ENCODE measurements at regions of chr10 and their contacts with region 1.

Region 1: DNA sequence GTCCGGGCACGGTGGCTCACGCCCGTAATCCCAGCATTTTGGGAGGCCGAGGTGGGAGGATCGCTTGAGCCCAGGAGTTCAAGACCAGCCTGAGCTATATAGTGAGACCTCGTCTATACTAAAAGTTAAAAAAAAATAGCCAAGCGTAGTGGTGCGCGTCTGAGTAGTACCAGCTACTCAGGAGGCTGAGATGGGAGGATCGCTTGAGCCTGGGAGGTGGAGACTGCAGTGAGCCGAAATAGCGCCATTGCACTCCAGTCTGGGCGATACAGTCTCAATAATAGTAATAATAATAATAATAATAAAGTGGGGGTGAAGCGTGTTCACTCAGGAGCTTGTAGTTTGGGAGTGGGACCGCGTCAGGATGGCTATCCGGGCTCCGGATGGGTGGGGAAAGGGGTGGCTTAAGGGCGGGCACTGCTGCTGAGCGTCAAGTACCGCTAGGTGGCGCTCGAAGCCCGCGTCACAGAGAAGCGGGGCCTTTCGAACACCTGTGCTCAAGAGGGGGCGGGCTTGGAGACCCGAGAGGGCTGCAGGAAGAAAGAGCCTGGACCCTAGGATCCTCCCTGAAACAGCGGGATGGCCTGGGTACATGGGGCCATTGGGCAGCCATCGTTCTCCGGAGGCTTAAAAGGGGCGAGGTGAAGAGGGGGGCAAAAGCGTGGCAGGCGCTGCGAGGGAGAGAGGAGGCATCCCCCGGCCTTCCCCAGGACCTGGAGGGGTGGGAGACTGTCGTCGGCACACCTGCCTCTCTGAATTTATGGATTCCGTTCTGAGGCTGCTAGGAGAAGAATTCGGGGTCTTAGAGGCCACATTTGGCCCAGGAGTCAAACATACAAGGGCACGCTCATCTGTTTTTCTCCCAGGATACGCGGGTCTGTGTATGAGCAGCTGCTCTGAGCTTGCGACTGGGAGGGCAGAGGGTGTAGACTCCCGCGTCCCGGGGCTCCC is 14.5 kb downstream of the LBX1 start:
- DNase-seq: no peak
- H3K4me3 ChIP-seq: no peak overlapping the region
- CTCF ChIP-seq: peak; percentile 82

Region 2: GRCh38 chr10:101141616-101142532 is 72.8 kb before region 1 on chr10:
- CTCF ChIA-PET with region 1: no interaction called
- POLR2A ChIA-PET with region 1: no interaction called
- DNase-seq: peak; percentile 16
- H3K4me3 ChIP-seq: no peak overlapping the region; the same call in 1 of the 2 replicates
- CTCF ChIP-seq: peak; percentile 95

Region 3: GRCh38 chr10:101155896-101156295 is 58.8 kb before region 1 on chr10:
- CTCF ChIA-PET with region 1: interaction called, 12 read pairs
- POLR2A ChIA-PET with region 1: no interaction called
- DNase-seq: no peak
- H3K4me3 ChIP-seq: no peak overlapping the region
- CTCF ChIP-seq: no peak

Region 4: GRCh38 chr10:101238732-101239105 is 24.0 kb after region 1 on chr10:
- CTCF ChIA-PET with region 1: interaction called, 27 read pairs
- POLR2A ChIA-PET with region 1: no interaction called
- DNase-seq: no peak
- H3K4me3 ChIP-seq: no peak overlapping the region
- CTCF ChIP-seq: peak; percentile 25

Region 5: GRCh38 chr10:101467286-101467770 is 252.6 kb after region 1 on chr10:
- CTCF ChIA-PET with region 1: interaction called, 118 read pairs
- POLR2A ChIA-PET with region 1: no interaction called
- DNase-seq: peak; percentile 33
- H3K4me3 ChIP-seq: no peak overlapping the region
- CTCF ChIP-seq: peak; percentile 85

Region 6: GRCh38 chr10:101558202-101558601 is 343.5 kb after region 1 on chr10:
- CTCF ChIA-PET with region 1: interaction called, 15 read pairs
- POLR2A ChIA-PET with region 1: no interaction called
- DNase-seq: no peak
- H3K4me3 ChIP-seq: no peak overlapping the region
- CTCF ChIP-seq: no peak

Region 7: GRCh38 chr10:101595591-101596433 is 381.1 kb after region 1 on chr10:
- CTCF ChIA-PET with region 1: interaction called, 15 read pairs
- POLR2A ChIA-PET with region 1: no interaction called
- DNase-seq: no peak
- H3K4me3 ChIP-seq: no peak overlapping the region
- CTCF ChIP-seq: no peak